B cell (primary cell): ENCODE measurements at regions of chr12 and their contacts with region 1.

Region 1: GRCh38 chr12:120086801-120087621 is 29.5 kb downstream of the RAB35 start:
- DNase-seq: peak; percentile 100
- ATAC-seq: peak; percentile 91
- H3K4me3 ChIP-seq: peak overlapping the region; percentile 26 to 63 (median 43)
- H3K4me3 Mint-ChIP-seq: peak overlapping the region; percentile 81
- H3K27ac ChIP-seq: peak overlapping the region; percentile 43 to 49
- H3K27ac Mint-ChIP-seq: peak overlapping the region; percentile 88
- H3K4me1 ChIP-seq: peaks cover 9 to 13% of the 10 kb centered on the region in 2 donors
- H3K4me1 Mint-ChIP-seq: peaks cover 16% of the 10 kb centered on the region
- H3K27me3 ChIP-seq: no peaks in the 10 kb centered on the region
- H3K27me3 Mint-ChIP-seq: no peaks in the 10 kb centered on the region
- CTCF ChIP-seq: peak; percentile 98

Region 2: GRCh38 chr12:119876761-119877638 is 210.0 kb before region 1 on chr12 and contains the start of gene CIT:
- CTCF ChIA-PET with region 1: no interaction called
- POLR2A ChIA-PET with region 1: no interaction called
- intact Hi-C with region 1: loop called (anchors 1 kb)
- DNase-seq: peak; percentile 87
- ATAC-seq: peak; percentile 99
- H3K4me3 ChIP-seq: peak within 1 kb of the TSS; percentile 47 to 90 (median 87)
- H3K4me3 Mint-ChIP-seq: peak within 1 kb of the TSS; percentile 84
- H3K27ac ChIP-seq: peak within 1 kb of the TSS in 1 of 2 donors; percentile 54
- H3K27ac Mint-ChIP-seq: peak within 1 kb of the TSS; percentile 28
- H3K4me1 ChIP-seq: peaks cover 0 to 11% of the 10 kb centered on the region in 2 donors
- H3K4me1 Mint-ChIP-seq: peaks cover 13% of the 10 kb centered on the region
- H3K27me3 ChIP-seq: no peaks in the 10 kb centered on the region
- H3K27me3 Mint-ChIP-seq: peaks cover 9% of the 10 kb centered on the region
- CTCF ChIP-seq: no peak
- total RNA-seq, gene CIT: 6.1 and 6.2 TPM in 2 replicates

Region 3: GRCh38 chr12:119988782-119989668 is 98.0 kb before region 1 on chr12 and contains the start of gene BICDL1:
- CTCF ChIA-PET with region 1: interaction called, 21 read pairs
- POLR2A ChIA-PET with region 1: interaction called, 8 read pairs
- intact Hi-C with region 1: loop called (anchors 1 kb)
- DNase-seq: peak; percentile 98
- ATAC-seq: peak; percentile 82
- H3K4me3 ChIP-seq: peak within 1 kb of the TSS in 4 of 5 experiments; percentile 47 to 69 (median 59)
- H3K4me3 Mint-ChIP-seq: peak within 1 kb of the TSS; percentile 88
- H3K27ac ChIP-seq: peak within 1 kb of the TSS; percentile 41 to 67
- H3K27ac Mint-ChIP-seq: peak within 1 kb of the TSS; percentile 89
- H3K4me1 ChIP-seq: peaks cover 13 to 16% of the 10 kb centered on the region in 2 donors
- H3K4me1 Mint-ChIP-seq: peaks cover 24% of the 10 kb centered on the region
- H3K27me3 ChIP-seq: peaks cover 0 to 6% (median 0%) of the 10 kb centered on the region in 4 experiments
- H3K27me3 Mint-ChIP-seq: peaks cover 5% of the 10 kb centered on the region
- CTCF ChIP-seq: no peak
- total RNA-seq, gene BICDL1: 41.5 and 43.6 TPM in 2 replicates

Region 4: GRCh38 chr12:120110550-120111501 is 23.8 kb after region 1 on chr12:
- CTCF ChIA-PET with region 1: interaction called, 12 read pairs
- POLR2A ChIA-PET with region 1: interaction called, 5 read pairs
- intact Hi-C with region 1: loop called (anchors 1 kb)
- DNase-seq: peak; percentile 79
- ATAC-seq: peak; percentile 88
- H3K4me3 ChIP-seq: peak overlapping the region in 3 of 5 experiments; percentile 9 to 25 (median 21)
- H3K4me3 Mint-ChIP-seq: peak overlapping the region; percentile 81
- H3K27ac ChIP-seq: peak overlapping the region; percentile 59 to 72
- H3K27ac Mint-ChIP-seq: peak overlapping the region; percentile 87
- H3K4me1 ChIP-seq: peaks cover 44 to 55% of the 10 kb centered on the region in 2 donors
- H3K4me1 Mint-ChIP-seq: peaks cover 60% of the 10 kb centered on the region
- H3K27me3 ChIP-seq: no peaks in the 10 kb centered on the region
- H3K27me3 Mint-ChIP-seq: no peaks in the 10 kb centered on the region
- CTCF ChIP-seq: no peak

Region 5: GRCh38 chr12:120200364-120200800 is 113.4 kb after region 1 on chr12:
- CTCF ChIA-PET with region 1: interaction called, 6 read pairs
- POLR2A ChIA-PET with region 1: interaction called, 10 read pairs
- intact Hi-C with region 1: loop called (anchors 1 kb)
- DNase-seq: no peak
- ATAC-seq: no peak
- H3K4me3 ChIP-seq: peak overlapping the region; percentile 61 to 98 (median 93)
- H3K4me3 Mint-ChIP-seq: peak overlapping the region; percentile 95
- H3K27ac ChIP-seq: peak overlapping the region; percentile 49 to 80
- H3K27ac Mint-ChIP-seq: peak overlapping the region; percentile 100
- H3K4me1 ChIP-seq: peaks cover 22 to 29% of the 10 kb centered on the region in 2 donors
- H3K4me1 Mint-ChIP-seq: peaks cover 25% of the 10 kb centered on the region
- H3K27me3 ChIP-seq: no peaks in the 10 kb centered on the region
- H3K27me3 Mint-ChIP-seq: no peaks in the 10 kb centered on the region
- CTCF ChIP-seq: no peak